H1 (cell line): ENCODE measurements at regions of chr9 and their contacts with region 1.

Region 1: DNA sequence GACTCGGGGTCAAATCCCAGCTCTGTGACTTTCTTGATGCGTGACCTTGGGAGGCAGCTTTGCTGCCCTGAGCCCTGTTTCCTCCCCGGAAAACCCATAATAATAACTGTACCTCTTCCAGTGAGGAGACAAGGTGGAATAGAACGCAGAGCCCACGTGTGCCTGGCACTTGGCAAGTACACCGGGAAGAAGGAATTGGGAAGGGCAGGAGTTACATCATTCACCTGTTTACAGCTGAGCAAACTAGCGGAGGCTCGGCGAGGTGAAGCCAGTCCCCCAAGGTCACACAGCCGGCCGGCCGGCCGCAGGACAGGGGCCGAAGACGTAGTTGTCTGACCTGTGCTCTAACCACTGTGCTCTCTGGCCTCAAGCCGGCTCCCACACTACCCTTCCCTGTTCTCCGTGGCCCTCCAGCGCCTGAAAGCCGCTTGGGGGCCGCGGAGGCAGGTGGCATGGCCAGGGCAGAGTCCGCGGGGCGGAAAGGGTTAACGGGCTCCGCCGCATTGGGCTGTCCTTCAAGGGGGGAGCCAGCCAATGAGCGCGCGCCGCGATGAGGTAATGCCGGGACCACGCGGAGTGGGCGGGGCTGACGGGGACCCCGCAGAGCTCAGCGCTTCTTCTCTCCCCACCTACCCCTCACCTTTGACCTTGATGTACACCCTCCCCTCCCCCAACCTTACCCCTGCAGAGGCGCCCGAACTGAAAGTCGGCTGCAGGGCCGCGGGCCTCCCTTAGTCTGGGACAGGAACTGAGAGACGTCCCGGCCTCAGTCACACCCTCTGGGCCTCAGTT is 125.2 kb downstream of the C9orf50 start:
- DNase-seq: peak; percentile 87 to 99
- H3K4me3 ChIP-seq: peak overlapping the region; percentile 39 to 66 (median 55)
- H3K27ac ChIP-seq: peak overlapping the region; percentile 30; the same call in 1 of the 2 replicates
- H3K4me1 ChIP-seq: peaks cover 2 to 41% (median 32%) of the 10 kb centered on the region in 4 experiments
- H3K27me3 ChIP-seq: peaks cover 0 to 16% (median 15%) of the 10 kb centered on the region in 4 experiments; a peak in 5 of 7 replicates
- CTCF ChIP-seq: no peak
- EP300 ChIP-seq: peak in 1 of 2 experiments; percentile 33; a peak in 1 of 3 replicates
- POLR2A ChIP-seq: no peak
- RAD21 ChIP-seq: peak in 1 of 2 experiments; percentile 15; a peak in 1 of 4 replicates

Region 2: DNA sequence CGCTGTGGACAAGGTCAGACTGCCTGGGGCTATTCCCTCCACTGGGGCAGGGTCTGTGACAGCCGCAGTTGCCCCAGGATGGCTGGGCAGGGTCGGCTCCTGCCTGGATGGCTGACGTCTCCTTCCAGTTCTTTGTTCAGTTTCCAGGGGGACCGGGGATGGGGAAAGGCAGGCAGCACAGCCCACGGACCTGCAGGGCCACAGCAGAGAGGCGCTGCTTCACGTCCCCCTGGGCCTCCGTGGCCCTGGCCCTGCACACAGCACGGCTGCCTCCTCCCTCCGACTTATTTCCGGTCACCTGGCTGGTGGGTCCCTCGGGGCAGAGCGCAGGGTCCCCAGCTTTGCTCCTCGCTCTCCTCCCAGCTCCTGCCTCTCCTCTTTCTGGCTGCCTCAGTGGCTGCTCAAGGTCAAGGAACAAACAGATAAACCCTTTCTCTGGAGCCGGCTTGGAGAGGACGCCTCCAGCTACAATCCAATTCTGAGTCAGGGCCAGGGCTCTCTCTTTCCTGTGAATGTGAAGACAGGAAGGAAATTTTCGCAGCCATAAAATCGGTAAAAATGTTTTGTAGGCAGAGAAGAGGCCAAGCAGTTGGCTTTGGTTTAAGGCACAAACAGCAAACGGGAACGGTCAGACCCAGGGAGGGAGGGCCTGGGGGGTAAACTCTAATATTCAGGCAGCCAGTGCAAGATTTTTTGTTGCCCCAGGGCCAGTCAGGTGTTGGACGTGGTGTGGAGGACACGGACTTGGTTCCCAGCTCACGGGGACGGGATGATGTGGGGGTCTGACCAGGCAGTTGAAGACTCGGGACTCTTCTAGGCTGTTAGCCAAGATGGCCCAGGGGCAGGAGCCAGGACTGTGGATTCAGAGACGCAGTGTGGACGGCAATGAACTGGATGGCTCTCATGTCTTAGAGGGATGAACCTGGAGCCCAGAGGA is 44.4 kb before region 1 on chr9:
- CTCF ChIA-PET with region 1: no interaction called
- POLR2A ChIA-PET with region 1: no interaction called
- DNase-seq: no peak
- H3K4me3 ChIP-seq: no peak overlapping the region
- H3K27ac ChIP-seq: no peak overlapping the region
- H3K4me1 ChIP-seq: peaks cover 0 to 6% (median 0%) of the 10 kb centered on the region in 4 experiments; a peak in 6 of 7 replicates
- H3K27me3 ChIP-seq: peaks cover 0 to 3% (median 0%) of the 10 kb centered on the region in 4 experiments; a peak in 2 of 7 replicates
- CTCF ChIP-seq: no peak
- EP300 ChIP-seq: no peak
- POLR2A ChIP-seq: no peak
- RAD21 ChIP-seq: no peak

Region 3: GRCh38 chr9:129482521-129483414 is 13.0 kb before region 1 on chr9:
- CTCF ChIA-PET with region 1: interaction called, 5 read pairs
- POLR2A ChIA-PET with region 1: interaction called, 45 read pairs
- DNase-seq: no peak
- H3K4me3 ChIP-seq: peak overlapping the region; percentile 31 to 66 (median 36)
- H3K27ac ChIP-seq: no peak overlapping the region
- H3K4me1 ChIP-seq: peaks cover 8 to 30% (median 19%) of the 10 kb centered on the region in 4 experiments
- H3K27me3 ChIP-seq: peaks cover 14 to 60% (median 51%) of the 10 kb centered on the region in 4 experiments
- CTCF ChIP-seq: no peak
- EP300 ChIP-seq: no peak
- POLR2A ChIP-seq: no peak
- RAD21 ChIP-seq: no peak

Region 4: DNA sequence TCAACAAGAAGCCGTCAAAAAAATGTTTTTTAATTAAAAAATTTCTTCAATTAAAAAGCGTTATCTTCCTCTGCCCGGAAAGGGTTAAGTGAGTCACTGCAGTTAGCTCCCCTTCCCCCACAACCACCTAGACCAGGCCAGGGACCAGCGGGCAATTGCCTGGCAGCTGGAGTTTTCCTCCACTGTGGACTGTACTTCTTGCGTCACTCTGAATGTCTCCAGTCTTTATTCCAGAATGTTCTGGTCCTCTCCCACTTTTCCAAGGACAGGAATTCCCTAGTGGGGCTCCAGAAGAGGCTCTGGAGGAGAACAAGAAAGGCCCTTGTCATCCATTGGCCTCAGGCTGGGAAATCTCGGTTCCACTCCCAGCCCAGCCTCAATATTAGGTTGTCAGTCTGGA is 11.2 kb after region 1 on chr9:
- CTCF ChIA-PET with region 1: interaction called, 4 read pairs
- POLR2A ChIA-PET with region 1: interaction called, 21 read pairs
- DNase-seq: no peak
- H3K4me3 ChIP-seq: no peak overlapping the region
- H3K27ac ChIP-seq: no peak overlapping the region
- H3K4me1 ChIP-seq: peaks cover 0 to 8% (median 3%) of the 10 kb centered on the region in 4 experiments; a peak in 4 of 7 replicates
- H3K27me3 ChIP-seq: no peaks in the 10 kb centered on the region
- CTCF ChIP-seq: no peak
- EP300 ChIP-seq: no peak
- POLR2A ChIP-seq: no peak
- RAD21 ChIP-seq: no peak

Region 5: DNA sequence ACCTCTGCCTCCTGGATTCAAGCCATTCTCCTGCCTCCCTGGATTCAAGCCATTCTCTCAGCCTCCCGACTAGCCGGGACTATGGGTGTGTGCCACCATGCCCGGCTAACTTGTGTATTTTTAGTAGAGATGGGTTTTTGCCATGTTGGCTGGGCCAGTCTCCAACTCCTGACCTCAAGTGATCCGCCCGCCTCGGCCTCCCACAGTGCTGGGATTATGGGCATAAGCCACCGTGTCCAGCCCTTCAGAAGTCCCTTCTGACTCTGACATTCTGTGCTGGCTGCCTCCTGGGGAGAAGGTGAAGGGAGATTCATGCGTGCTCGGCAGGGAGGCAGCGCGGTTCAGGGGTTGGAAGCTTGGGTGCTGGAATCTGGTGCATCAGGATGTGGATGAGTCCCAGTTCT is 198.5 kb after region 1 on chr9:
- CTCF ChIA-PET with region 1: no interaction called
- POLR2A ChIA-PET with region 1: no interaction called
- DNase-seq: no peak
- H3K4me3 ChIP-seq: no peak overlapping the region
- H3K27ac ChIP-seq: no peak overlapping the region
- H3K4me1 ChIP-seq: peaks cover 0 to 9% (median 7%) of the 10 kb centered on the region in 4 experiments; a peak in 5 of 7 replicates
- H3K27me3 ChIP-seq: peaks cover 0 to 18% (median 9%) of the 10 kb centered on the region in 4 experiments; a peak in 3 of 7 replicates
- CTCF ChIP-seq: no peak
- EP300 ChIP-seq: no peak
- POLR2A ChIP-seq: no peak
- RAD21 ChIP-seq: no peak